Cardiac septum (tissue), 1 donor: ENCODE measurements at regions of chr13 and their contacts with region 1.

Region 1: DNA sequence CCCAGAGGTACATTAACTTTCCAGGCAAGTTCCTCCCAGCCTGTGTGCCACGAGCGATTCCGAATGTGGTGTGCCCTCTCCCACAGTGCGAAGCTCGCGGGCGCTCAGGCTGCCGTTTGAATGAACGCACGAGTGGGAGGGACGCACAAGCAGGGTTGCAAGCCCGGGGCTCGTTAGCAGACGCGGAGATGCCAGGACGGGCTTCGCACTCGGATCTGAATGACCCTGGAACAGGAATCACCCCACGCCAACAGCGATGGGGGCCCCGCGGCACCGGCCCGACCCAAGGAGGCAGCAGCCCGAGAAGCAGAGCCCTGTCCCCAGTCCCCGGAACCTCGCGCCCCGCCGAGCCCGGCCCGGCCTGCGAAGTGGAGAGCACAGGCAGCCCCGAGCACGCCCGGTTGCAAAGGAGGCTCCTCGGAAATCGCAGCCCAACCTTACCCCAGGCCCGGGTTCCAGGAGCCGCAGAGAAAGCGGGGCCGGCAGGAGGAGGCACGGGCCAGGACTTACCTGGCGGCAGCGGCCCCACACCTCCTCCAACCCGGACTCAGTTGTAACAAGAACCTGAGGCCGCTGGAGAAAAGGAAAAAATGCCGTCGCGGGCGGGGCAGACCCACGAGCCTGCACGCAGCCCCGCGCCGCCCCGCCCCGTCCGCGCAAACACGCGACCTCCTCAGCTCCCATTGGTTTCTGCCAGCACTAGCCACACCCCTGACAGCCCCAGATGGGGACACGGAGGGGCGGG is at the start of gene SLC25A30:
- DNase-seq: peak; percentile 98
- total RNA-seq, gene SLC25A30: 83.4 TPM

Region 2: DNA sequence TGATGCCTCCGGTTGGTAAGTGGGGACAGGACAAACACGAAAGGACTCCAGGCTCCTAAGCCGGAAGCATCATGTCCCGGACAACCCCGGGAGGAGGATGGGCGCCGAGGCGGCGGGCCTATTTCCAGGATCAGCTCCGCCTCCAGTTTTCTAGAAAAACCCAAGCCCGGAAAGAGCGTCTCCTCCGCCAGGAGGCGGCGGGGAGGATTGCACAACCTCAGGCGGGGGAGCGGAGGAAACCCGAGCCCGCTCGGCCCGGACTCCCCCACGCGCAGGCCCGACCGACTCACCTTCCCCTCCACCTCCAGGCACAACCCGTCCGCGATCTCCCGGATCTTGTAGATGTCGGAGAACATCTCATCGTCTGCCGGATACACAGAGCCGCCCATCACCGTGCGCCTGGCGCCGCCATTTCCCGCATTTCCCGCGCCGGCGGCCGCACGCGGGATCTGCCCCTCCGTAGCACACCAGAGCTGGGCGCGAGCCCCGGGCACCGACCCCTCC is 77.5 kb before region 1 on chr13:
- intact Hi-C with region 1: loop called (anchors 2 kb)
- DNase-seq: peak; percentile 95

Region 3: GRCh38 chr13:45441633-45442032 is 23.7 kb after region 1 on chr13:
- intact Hi-C with region 1: loop called (anchors 2 kb)
- DNase-seq: no peak

Region 4: GRCh38 chr13:45464687-45465453 is 46.9 kb after region 1 on chr13 and contains the start of gene COG3:
- intact Hi-C with region 1: loop called (anchors 5 kb)
- DNase-seq: peak; percentile 95
- total RNA-seq, gene COG3: 16.5 TPM